GM12878 (cell line): ENCODE measurements at regions of chr6 and their contacts with region 1.

Region 1: GRCh38 chr6:35342258-35343091 is at the start of gene PPARD:
- DNase-seq: peak; percentile 71
- ATAC-seq: peak; percentile 97
- H3K4me3 ChIP-seq: peak within 1 kb of the TSS; percentile 84
- H3K27ac ChIP-seq: peak within 1 kb of the TSS; percentile 70
- H3K4me1 ChIP-seq: no peaks in the 10 kb centered on the region; the same call in 1 of the 2 replicates
- H3K27me3 ChIP-seq: no peaks in the 10 kb centered on the region
- CTCF ChIP-seq: peak; percentile 97 to 99 (median 97); a peak in 5 of 6 replicates
- EP300 ChIP-seq: no peak
- POLR2A ChIP-seq: 0 out of 2 replicates have a peak, but pooled peaks have one; percentile 41
- RAD21 ChIP-seq: peak; percentile 100
- polyA plus RNA-seq, gene PPARD: 0.05 to 0.38 TPM

Region 2: GRCh38 chr6:35280903-35281302 is 61.6 kb before region 1 on chr6:
- CTCF ChIA-PET with region 1: no interaction called
- POLR2A ChIA-PET with region 1: no interaction called
- RAD21 ChIA-PET with region 1: no interaction called
- SMC1A ChIA-PET with region 1: no interaction called
- in situ Hi-C with region 1: no loop called
- intact Hi-C with region 1: no loop called
- DNase-seq: no peak
- ATAC-seq: no peak
- H3K4me3 ChIP-seq: no peak overlapping the region
- H3K27ac ChIP-seq: no peak overlapping the region
- H3K4me1 ChIP-seq: no peaks in the 10 kb centered on the region
- H3K27me3 ChIP-seq: no peaks in the 10 kb centered on the region
- CTCF ChIP-seq: no peak
- EP300 ChIP-seq: no peak
- POLR2A ChIP-seq: no peak
- RAD21 ChIP-seq: no peak

Region 3: DNA sequence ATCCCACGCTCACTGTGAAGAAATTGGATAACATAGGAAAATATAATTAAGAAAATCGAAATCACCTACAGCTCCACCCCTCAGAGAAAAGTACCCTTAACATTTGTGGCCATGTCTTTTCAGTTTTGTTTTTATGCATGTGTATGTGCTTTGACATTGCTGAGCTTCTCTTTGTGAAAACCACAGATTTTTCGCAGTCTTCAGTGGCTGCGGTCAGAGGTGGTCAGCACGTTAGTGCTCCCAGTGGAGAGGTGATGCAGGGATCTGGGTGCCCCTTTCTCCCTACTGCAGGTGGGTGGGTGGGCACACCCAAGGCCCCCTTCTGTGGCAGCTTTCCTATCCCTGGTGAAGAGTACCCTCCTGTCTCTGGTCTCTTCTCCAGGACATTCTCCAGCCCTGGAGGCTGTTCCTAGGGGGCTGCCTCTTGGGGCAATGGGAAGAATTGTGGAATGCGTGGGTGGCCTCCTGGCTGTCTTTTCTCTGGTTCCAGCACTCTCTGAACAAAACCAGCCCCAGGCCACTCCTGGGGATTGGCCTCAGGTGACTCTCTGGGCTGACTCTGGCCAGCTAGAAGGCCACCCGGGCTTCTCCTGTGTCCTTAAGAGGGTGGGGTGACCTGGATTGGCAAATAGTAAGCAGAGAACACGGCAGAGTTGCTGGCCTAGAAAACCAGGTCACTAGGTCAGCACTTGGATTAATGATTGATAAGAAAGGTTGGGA is 59.8 kb after region 1 on chr6:
- CTCF ChIA-PET with region 1: interaction called, 3 read pairs
- POLR2A ChIA-PET with region 1: no interaction called
- RAD21 ChIA-PET with region 1: interaction called, 11 read pairs
- SMC1A ChIA-PET with region 1: interaction called, 16 read pairs
- in situ Hi-C with region 1: no loop called
- intact Hi-C with region 1: loop called (anchors 2 kb)
- DNase-seq: peak; percentile 51
- ATAC-seq: peak; percentile 95
- H3K4me3 ChIP-seq: peak overlapping the region; percentile 48; the same call in 1 of the 2 replicates
- H3K27ac ChIP-seq: peak overlapping the region; percentile 5
- H3K4me1 ChIP-seq: peaks cover 23% of the 10 kb centered on the region
- H3K27me3 ChIP-seq: no peaks in the 10 kb centered on the region
- CTCF ChIP-seq: peak; percentile 15 to 31 (median 30); a peak in 4 of 6 replicates
- EP300 ChIP-seq: peak; percentile 30 to 33; a peak in 1 of 4 replicates
- POLR2A ChIP-seq: no peak
- RAD21 ChIP-seq: peak; percentile 29; the same call in 1 of the 2 replicates

Region 4: GRCh38 chr6:35468181-35468979 is 125.9 kb after region 1 on chr6 and contains the start of gene RPL10A:
- CTCF ChIA-PET with region 1: interaction called, 44 read pairs
- POLR2A ChIA-PET with region 1: interaction called, 7 read pairs
- RAD21 ChIA-PET with region 1: interaction called, 8 read pairs
- SMC1A ChIA-PET with region 1: interaction called, 22 read pairs
- in situ Hi-C with region 1: no loop called
- intact Hi-C with region 1: loop called (anchors 1 kb)
- DNase-seq: peak; percentile 94
- ATAC-seq: peak; percentile 89
- H3K4me3 ChIP-seq: peak within 1 kb of the TSS; percentile 99
- H3K27ac ChIP-seq: peak within 1 kb of the TSS; percentile 87
- H3K4me1 ChIP-seq: no peaks in the 10 kb centered on the region
- H3K27me3 ChIP-seq: no peaks in the 10 kb centered on the region
- CTCF ChIP-seq: peak; percentile 98 to 100 (median 99); a peak in 5 of 6 replicates
- EP300 ChIP-seq: no peak
- POLR2A ChIP-seq: peak; percentile 100
- RAD21 ChIP-seq: peak; percentile 79
- polyA plus RNA-seq, gene RPL10A: 2,399 to 2,699 TPM